HepG2 (cell line): ENCODE measurements at regions of chr19 and their contacts with region 1.

Region 1: GRCh38 chr19:56577719-56578602 is 10.7 kb downstream of the ZNF470 start:
- DNase-seq: no peak
- ATAC-seq: no peak
- H3K4me3 ChIP-seq: no peak overlapping the region
- H3K27ac ChIP-seq: no peak overlapping the region
- H3K4me1 ChIP-seq: no peaks in the 10 kb centered on the region
- H3K27me3 ChIP-seq: no peaks in the 10 kb centered on the region; a peak in 1 of 5 replicates
- CTCF ChIP-seq: no peak
- EP300 ChIP-seq: no peak
- POLR2A ChIP-seq: no peak
- RAD21 ChIP-seq: no peak

Region 2: GRCh38 chr19:55940306-55940705 is 637.7 kb before region 1 on chr19:
- CTCF ChIA-PET with region 1: no interaction called
- POLR2A ChIA-PET with region 1: no interaction called
- in situ Hi-C with region 1: no loop called
- intact Hi-C with region 1: loop called (anchors 10 kb)
- DNase-seq: no peak
- ATAC-seq: no peak
- H3K4me3 ChIP-seq: no peak overlapping the region
- H3K27ac ChIP-seq: no peak overlapping the region
- H3K4me1 ChIP-seq: no peaks in the 10 kb centered on the region
- H3K27me3 ChIP-seq: peaks cover 0 to 6% of the 10 kb centered on the region in 2 experiments; a peak in 3 of 5 replicates
- CTCF ChIP-seq: no peak
- EP300 ChIP-seq: no peak
- POLR2A ChIP-seq: no peak
- RAD21 ChIP-seq: no peak